HepG2 (cell line): ENCODE measurements at regions of chr12 and their contacts with region 1.

Region 1: GRCh38 chr12:50763639-50764285 is at the start of gene ATF1:
- DNase-seq: peak; percentile 84
- ATAC-seq: peak; percentile 86
- H3K4me3 ChIP-seq: peak within 1 kb of the TSS; percentile 83 to 95 (median 90)
- H3K27ac ChIP-seq: peak within 1 kb of the TSS; percentile 98
- H3K4me1 ChIP-seq: peaks cover 47% of the 10 kb centered on the region
- H3K27me3 ChIP-seq: no peaks in the 10 kb centered on the region; a peak in 1 of 5 replicates
- CTCF ChIP-seq: peak; percentile 34
- EP300 ChIP-seq: 0 out of 4 replicates have a peak, but pooled peaks of 1 of the 2 experiments have one; percentile 33
- POLR2A ChIP-seq: peak; percentile 91 to 97
- RAD21 ChIP-seq: peak; percentile 51
- total RNA-seq, gene ATF1: 29.3 and 48.0 TPM in 2 replicates

Region 2: GRCh38 chr12:50776749-50777728 is 13.3 kb after region 1 on chr12:
- CTCF ChIA-PET with region 1: no interaction called
- POLR2A ChIA-PET with region 1: interaction called, 5 read pairs
- in situ Hi-C with region 1: no loop called
- intact Hi-C with region 1: loop called (anchors 1 kb)
- DNase-seq: no peak
- ATAC-seq: no peak
- H3K4me3 ChIP-seq: no peak overlapping the region
- H3K27ac ChIP-seq: no peak overlapping the region
- H3K4me1 ChIP-seq: peaks cover 12% of the 10 kb centered on the region
- H3K27me3 ChIP-seq: no peaks in the 10 kb centered on the region
- CTCF ChIP-seq: no peak
- EP300 ChIP-seq: no peak
- POLR2A ChIP-seq: no peak
- RAD21 ChIP-seq: no peak

Region 3: GRCh38 chr12:50786498-50787231 is 22.9 kb after region 1 on chr12:
- CTCF ChIA-PET with region 1: no interaction called
- POLR2A ChIA-PET with region 1: interaction called, 28 read pairs
- in situ Hi-C with region 1: no loop called
- intact Hi-C with region 1: no loop called
- DNase-seq: peak; percentile 90
- ATAC-seq: peak; percentile 89
- H3K4me3 ChIP-seq: no peak overlapping the region
- H3K27ac ChIP-seq: peak overlapping the region; percentile 62
- H3K4me1 ChIP-seq: peaks cover 42% of the 10 kb centered on the region
- H3K27me3 ChIP-seq: no peaks in the 10 kb centered on the region
- CTCF ChIP-seq: no peak
- EP300 ChIP-seq: peak in 1 of 2 experiments; percentile 63; a peak in 1 of 4 replicates
- POLR2A ChIP-seq: no peak
- RAD21 ChIP-seq: no peak

Region 4: DNA sequence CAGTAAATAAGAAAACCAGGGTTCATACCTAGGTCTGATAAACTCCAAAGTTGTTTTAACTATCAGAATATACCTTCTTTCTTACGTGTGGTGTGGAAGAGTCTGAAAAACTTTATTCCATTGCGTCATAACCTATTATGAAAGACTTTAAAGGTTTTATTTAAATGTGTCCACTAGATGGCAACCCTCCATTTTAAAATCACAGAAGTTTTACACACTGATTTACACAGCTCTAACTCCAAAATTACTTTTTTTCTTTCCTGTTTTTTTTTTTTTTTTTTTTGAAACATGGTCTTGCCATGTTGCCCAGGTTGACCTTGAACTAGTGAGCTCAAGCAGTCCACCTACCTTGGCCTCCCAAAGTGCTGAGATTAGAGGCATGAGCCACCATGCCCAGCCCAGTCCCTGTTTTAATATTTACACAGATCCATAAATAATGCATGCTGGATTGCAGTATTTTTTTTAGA is 61.6 kb after region 1 on chr12:
- CTCF ChIA-PET with region 1: interaction called, 4 read pairs
- POLR2A ChIA-PET with region 1: no interaction called
- in situ Hi-C with region 1: no loop called
- intact Hi-C with region 1: loop called (anchors 5 kb)
- DNase-seq: peak; percentile 62
- ATAC-seq: peak; percentile 42
- H3K4me3 ChIP-seq: peak overlapping the region in 2 of 3 experiments; percentile 21 to 24; a peak in 2 of 6 replicates
- H3K27ac ChIP-seq: peak overlapping the region; percentile 47
- H3K4me1 ChIP-seq: peaks cover 22% of the 10 kb centered on the region
- H3K27me3 ChIP-seq: no peaks in the 10 kb centered on the region
- CTCF ChIP-seq: peak; percentile 58
- EP300 ChIP-seq: no peak
- POLR2A ChIP-seq: no peak
- RAD21 ChIP-seq: no peak; the same call in 1 of the 2 replicates

Region 5: GRCh38 chr12:50924439-50925341 is 160.9 kb after region 1 on chr12:
- CTCF ChIA-PET with region 1: no interaction called
- POLR2A ChIA-PET with region 1: interaction called, 14 read pairs
- in situ Hi-C with region 1: no loop called
- intact Hi-C with region 1: loop called (anchors 10 kb)
- DNase-seq: peak; percentile 89
- ATAC-seq: peak; percentile 87
- H3K4me3 ChIP-seq: peak overlapping the region; percentile 70 to 85 (median 85)
- H3K27ac ChIP-seq: peak overlapping the region; percentile 82
- H3K4me1 ChIP-seq: peaks cover 48% of the 10 kb centered on the region
- H3K27me3 ChIP-seq: peaks cover 0 to 3% of the 10 kb centered on the region in 2 experiments; a peak in 1 of 5 replicates
- CTCF ChIP-seq: no peak
- EP300 ChIP-seq: 0 out of 4 replicates have a peak, but pooled peaks of 1 of the 2 experiments have one; percentile 8
- POLR2A ChIP-seq: peak; percentile 17 to 37; a peak in 2 of 4 replicates
- RAD21 ChIP-seq: no peak

Region 6: GRCh38 chr12:50986966-50987737 is 223.4 kb after region 1 on chr12:
- CTCF ChIA-PET with region 1: no interaction called
- POLR2A ChIA-PET with region 1: interaction called, 23 read pairs
- in situ Hi-C with region 1: no loop called
- intact Hi-C with region 1: loop called (anchors 1 kb)
- DNase-seq: peak; percentile 46
- ATAC-seq: peak; percentile 91
- H3K4me3 ChIP-seq: no peak overlapping the region
- H3K27ac ChIP-seq: no peak overlapping the region
- H3K4me1 ChIP-seq: peaks cover 23% of the 10 kb centered on the region
- H3K27me3 ChIP-seq: no peaks in the 10 kb centered on the region
- CTCF ChIP-seq: peak; percentile 87
- EP300 ChIP-seq: no peak
- POLR2A ChIP-seq: no peak
- RAD21 ChIP-seq: peak; percentile 71

Region 7: DNA sequence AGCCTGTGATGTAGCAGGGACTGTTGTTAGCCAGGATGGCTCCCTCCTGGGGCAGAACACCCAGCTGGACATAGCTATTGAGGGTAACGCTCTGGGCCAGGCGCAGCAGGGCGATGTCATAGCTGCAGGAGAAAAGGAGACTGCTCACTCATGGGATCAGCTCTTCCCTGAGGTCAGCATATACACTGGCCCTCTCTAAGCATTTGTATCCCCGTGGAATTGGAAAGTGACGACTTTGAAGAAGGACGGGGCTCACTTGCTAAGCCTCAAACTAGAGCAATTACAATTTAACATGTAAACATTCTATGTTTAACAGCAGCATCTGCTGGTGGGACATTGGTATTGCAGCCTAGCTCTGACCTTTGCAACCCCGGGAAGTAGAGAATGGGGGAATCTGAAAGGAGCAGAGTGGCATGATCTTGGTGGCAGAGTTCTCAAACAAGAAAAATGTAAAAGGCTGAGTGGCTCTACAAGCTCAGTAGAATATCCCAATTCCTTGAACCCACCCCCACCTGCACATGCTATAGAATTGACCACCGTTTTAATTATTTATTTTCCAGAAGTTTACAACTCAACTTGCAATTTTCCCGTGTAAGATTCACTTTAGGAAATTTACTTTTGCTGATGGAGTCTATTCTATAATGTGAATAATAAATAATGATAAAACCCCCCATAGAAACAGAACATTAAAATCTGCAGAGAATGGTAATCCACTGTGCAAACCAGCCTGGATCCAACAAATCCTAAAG is 577.7 kb after region 1 on chr12:
- CTCF ChIA-PET with region 1: no interaction called
- POLR2A ChIA-PET with region 1: interaction called, 4 read pairs
- in situ Hi-C with region 1: no loop called
- intact Hi-C with region 1: loop called (anchors 10 kb)
- DNase-seq: peak; percentile 47
- ATAC-seq: peak; percentile 85
- H3K4me3 ChIP-seq: peak overlapping the region in 2 of 3 experiments; percentile 36 to 61; a peak in 4 of 6 replicates
- H3K27ac ChIP-seq: no peak overlapping the region
- H3K4me1 ChIP-seq: peaks cover 9% of the 10 kb centered on the region; the same call in 1 of the 2 replicates
- H3K27me3 ChIP-seq: no peaks in the 10 kb centered on the region
- CTCF ChIP-seq: peak; percentile 92
- EP300 ChIP-seq: no peak
- POLR2A ChIP-seq: no peak
- RAD21 ChIP-seq: peak; percentile 77